ENCODE measurements at regions of chr16 and their contacts with region 1.

Region 1: GRCh38 chr16:56608043-56608875 is at the start of gene MT2A:
- DNase-seq: peak; percentile 76 to 98 (median 90)

Region 2: GRCh38 chr16:56447286-56447685 is 161.0 kb before region 1 on chr16:
- intact Hi-C with region 1: loop called (anchors 10 kb)
- DNase-seq: no peak

Region 3: GRCh38 chr16:56547120-56547948 is 60.9 kb before region 1 on chr16:
- intact Hi-C with region 1: no loop called
- DNase-seq: peak; percentile 41 to 93 (median 68)

Region 4: DNA sequence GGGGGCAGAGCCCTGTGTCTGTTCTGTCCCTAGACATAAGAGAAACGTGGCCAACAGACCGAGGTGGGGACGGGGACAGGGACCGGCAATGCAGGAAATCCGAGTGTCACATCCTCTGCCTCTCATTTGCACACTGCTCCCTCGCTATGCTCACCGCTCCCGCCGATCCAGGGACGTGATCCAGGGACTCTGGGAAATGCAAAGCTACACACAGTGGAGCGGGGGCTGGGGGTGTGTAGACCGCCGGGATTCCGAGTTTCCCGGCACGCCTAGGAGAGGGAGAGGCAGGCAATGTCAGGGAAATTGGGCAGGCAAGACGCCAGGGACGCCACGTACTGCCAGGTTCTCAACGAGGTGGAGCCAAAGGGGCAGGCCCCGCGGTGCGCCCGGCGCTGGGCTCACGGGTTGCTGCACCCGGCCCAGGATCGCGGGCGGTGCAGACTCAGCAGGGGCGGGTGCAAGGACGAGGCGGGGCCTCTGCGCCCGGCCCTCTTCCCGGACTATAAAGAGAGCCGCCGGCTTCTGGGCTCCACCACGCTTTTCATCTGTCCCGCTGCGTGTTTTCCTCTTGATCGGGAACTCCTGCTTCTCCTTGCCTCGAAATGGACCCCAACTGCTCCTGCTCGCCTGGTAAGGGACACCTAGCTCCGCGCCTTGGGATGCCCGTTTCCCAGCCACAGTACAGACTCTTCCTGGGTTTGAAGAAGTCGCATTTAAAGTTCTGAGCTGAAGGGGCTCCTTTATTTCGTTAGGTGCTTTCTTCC is 73.9 kb after region 1 on chr16 and contains the start of gene MT1X:
- intact Hi-C with region 1: loop called (anchors 2 kb)
- DNase-seq: peak; percentile 68 to 98 (median 86)

Region 5: DNA sequence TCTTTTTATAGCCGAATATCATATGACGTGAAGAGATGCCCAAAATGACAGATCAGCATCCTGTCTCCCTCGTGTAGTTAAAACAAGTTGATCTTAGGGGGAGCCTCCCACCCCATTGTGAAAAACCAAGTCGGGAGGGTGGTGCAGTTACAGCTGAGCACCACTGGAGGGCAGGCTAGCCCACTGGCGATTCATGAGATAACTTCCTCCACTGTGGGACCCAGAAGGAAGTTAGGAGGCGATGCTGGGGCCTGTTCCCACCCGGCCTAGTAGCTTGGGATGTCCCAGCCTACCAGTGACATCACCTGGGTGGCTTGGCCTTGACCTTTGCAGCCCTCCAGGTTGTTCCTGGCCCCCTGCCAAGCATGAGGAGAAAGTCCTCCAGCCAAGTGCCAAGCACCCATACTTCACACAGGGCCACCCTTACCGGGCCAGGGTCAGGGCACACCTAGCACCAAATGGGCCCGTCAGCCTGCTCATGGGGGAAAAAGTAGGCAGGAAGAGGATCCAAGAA is 476.1 kb after region 1 on chr16:
- intact Hi-C with region 1: no loop called
- DNase-seq: peak; percentile 52 to 96 (median 75)